K562 (cell line): ENCODE measurements at regions of chr3 and their contacts with region 1.

Region 1: GRCh38 chr3:146326670-146327543 is 76.0 kb upstream of the PLSCR4 start:
- DNase-seq: peak in 1 of 4 experiments; percentile 8
- ATAC-seq: peak; percentile 70; the same call in 2 of the 3 replicates
- H3K4me3 ChIP-seq: no peak overlapping the region
- H3K27ac ChIP-seq: no peak overlapping the region
- H3K4me1 ChIP-seq: no peaks in the 10 kb centered on the region
- H3K27me3 ChIP-seq: no peaks in the 10 kb centered on the region
- CTCF ChIP-seq: peak; percentile 19 to 47 (median 24); a peak in 3 of 6 replicates
- EP300 ChIP-seq: no peak
- POLR2A ChIP-seq: no peak
- RAD21 ChIP-seq: peak; percentile 59 to 69

Region 2: DNA sequence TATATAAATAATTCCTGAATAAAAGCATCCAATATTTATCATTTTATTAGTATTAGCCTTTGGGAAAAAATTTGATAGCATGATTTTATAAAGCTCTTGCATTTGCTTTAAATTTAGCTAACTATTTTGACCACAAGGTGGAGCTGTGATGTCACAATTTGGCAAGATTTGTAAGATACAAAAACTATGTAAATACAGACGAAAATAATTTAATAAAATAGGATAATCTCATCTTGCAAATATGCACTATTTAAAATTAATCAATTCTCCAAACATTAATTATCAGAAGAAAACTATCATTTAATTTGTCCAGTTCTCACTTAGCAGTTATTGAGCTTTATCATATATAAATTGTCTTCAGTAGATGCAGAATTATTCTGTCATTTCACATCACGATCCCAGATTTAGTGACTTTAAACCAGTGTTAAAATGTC is 261.3 kb before region 1 on chr3:
- CTCF ChIA-PET with region 1: no interaction called
- POLR2A ChIA-PET with region 1: no interaction called
- in situ Hi-C with region 1: no loop called
- intact Hi-C with region 1: loop called (anchors 1 kb)
- DNase-seq: peak in 2 of 4 experiments; percentile 8 to 53
- ATAC-seq: no peak
- H3K4me3 ChIP-seq: no peak overlapping the region
- H3K27ac ChIP-seq: no peak overlapping the region
- H3K4me1 ChIP-seq: no peaks in the 10 kb centered on the region
- H3K27me3 ChIP-seq: no peaks in the 10 kb centered on the region
- CTCF ChIP-seq: peak; percentile 28 to 62 (median 31); a peak in 3 of 6 replicates
- EP300 ChIP-seq: no peak
- POLR2A ChIP-seq: no peak
- RAD21 ChIP-seq: peak; percentile 60 to 75

Region 3: DNA sequence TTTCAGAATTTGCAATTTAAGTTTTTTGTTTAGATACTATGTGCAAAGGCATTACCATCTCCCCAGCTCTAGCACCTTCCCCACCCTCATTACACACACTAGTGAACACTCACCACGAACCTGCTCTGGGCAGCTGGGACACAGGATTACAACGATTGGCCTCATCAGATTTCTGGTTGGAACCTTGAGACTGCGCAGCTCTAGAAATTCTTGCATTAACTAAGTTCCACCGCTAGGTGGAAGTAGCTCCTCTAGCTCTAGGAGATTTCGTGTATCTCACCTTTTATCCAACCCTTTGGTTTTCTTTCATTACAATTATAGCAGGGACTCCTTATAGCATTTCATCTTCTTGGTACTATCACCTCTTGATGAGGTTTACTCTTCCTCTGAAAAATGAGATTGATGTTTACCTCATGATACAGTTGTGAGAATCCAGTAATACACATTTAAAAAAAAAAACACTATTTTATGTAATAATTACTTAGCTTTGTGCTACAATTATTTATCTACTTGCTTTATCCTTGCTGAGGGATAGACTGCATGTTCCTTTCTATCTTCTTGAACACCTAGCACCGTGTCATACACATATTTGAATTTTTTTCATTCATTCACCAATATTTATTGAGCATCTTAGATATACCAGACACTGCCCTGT is 137.3 kb before region 1 on chr3:
- CTCF ChIA-PET with region 1: interaction called, 3 read pairs
- POLR2A ChIA-PET with region 1: interaction called, 5 read pairs
- in situ Hi-C with region 1: no loop called
- intact Hi-C with region 1: loop called (anchors 1 kb)
- DNase-seq: peak; percentile 32 to 52 (median 37)
- ATAC-seq: peak; percentile 90
- H3K4me3 ChIP-seq: no peak overlapping the region
- H3K27ac ChIP-seq: no peak overlapping the region
- H3K4me1 ChIP-seq: no peaks in the 10 kb centered on the region
- H3K27me3 ChIP-seq: no peaks in the 10 kb centered on the region
- CTCF ChIP-seq: peak; percentile 46 to 65 (median 64)
- EP300 ChIP-seq: no peak
- POLR2A ChIP-seq: no peak
- RAD21 ChIP-seq: peak; percentile 65 to 73

Region 4: DNA sequence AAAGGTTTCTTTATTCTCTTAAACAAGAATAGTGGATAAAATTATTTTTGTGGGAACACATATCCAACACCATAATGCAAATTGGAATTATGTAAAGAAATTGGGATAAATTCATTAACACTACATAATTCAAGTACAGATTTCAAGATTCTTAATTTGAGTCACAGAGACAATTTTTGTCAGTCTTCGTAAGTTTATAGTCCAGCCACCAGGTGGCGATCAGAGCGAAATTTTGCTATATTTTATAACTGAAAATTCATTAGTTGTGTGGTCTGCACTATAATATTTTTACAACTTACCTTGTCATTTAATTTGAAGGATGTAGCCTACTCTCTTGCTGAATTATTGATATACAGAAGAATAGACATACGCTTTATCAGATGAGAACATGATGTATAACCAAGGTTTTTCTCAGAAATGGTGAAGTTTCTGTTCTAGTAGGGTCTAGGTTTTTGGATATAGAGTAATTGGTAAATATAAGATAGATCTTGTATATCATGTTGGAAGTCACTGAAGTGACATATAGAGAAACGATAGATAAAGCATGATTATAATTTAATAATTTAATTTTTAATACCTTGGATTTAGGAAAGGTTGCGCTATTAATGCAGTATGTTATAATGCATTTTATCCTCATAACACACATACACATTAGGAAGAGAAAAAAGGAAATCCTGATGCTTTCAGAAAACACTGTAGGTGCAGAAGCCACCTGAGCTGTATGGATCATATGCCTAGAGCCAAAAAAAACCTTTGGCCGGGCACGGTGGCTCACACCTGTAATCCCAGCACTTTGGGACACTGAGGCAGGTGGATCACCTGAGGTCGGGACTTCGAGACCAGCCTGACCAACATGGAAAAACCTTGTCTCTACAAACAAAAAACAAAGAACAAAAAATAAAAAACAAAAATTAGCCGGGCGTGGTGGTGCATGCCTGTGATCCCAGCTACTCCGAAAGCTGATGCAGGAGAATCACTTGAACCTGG is 107.7 kb before region 1 on chr3:
- CTCF ChIA-PET with region 1: interaction called, 12 read pairs
- POLR2A ChIA-PET with region 1: no interaction called
- in situ Hi-C with region 1: no loop called
- intact Hi-C with region 1: loop called (anchors 1 kb)
- DNase-seq: peak; percentile 8 to 32 (median 15)
- ATAC-seq: no peak
- H3K4me3 ChIP-seq: no peak overlapping the region
- H3K27ac ChIP-seq: no peak overlapping the region
- H3K4me1 ChIP-seq: no peaks in the 10 kb centered on the region
- H3K27me3 ChIP-seq: no peaks in the 10 kb centered on the region
- CTCF ChIP-seq: peak; percentile 40 to 64 (median 49); a peak in 4 of 6 replicates
- EP300 ChIP-seq: no peak
- POLR2A ChIP-seq: no peak
- RAD21 ChIP-seq: peak; percentile 67 to 73